Calu3 (cell line): ENCODE measurements at regions of chr10 and their contacts with region 1.

Region 1: GRCh38 chr10:71285180-71285545 is 33.9 kb upstream of the SLC29A3 start:
- DNase-seq: peak; percentile 67
- H3K4me3 Mint-ChIP-seq: no peak overlapping the region
- H3K27ac Mint-ChIP-seq: no peak overlapping the region
- H3K4me1 Mint-ChIP-seq: no peaks in the 10 kb centered on the region
- H3K27me3 Mint-ChIP-seq: peaks cover 97% of the 10 kb centered on the region
- CTCF ChIP-seq: peak; percentile 88

Region 2: GRCh38 chr10:70903262-70903921 is 381.8 kb before region 1 on chr10:
- CTCF ChIA-PET with region 1: interaction called, 8 read pairs
- intact Hi-C with region 1: loop called (anchors 5 kb)
- DNase-seq: peak; percentile 70
- H3K4me3 Mint-ChIP-seq: no peak overlapping the region
- H3K27ac Mint-ChIP-seq: no peak overlapping the region
- H3K4me1 Mint-ChIP-seq: peaks cover 7% of the 10 kb centered on the region
- H3K27me3 Mint-ChIP-seq: peaks cover 94% of the 10 kb centered on the region
- CTCF ChIP-seq: peak; percentile 89

Region 3: GRCh38 chr10:70925377-70926225 is 359.6 kb before region 1 on chr10:
- CTCF ChIA-PET with region 1: interaction called, 4 read pairs
- intact Hi-C with region 1: loop called (anchors 5 kb)
- DNase-seq: peak; percentile 69
- H3K4me3 Mint-ChIP-seq: no peak overlapping the region
- H3K27ac Mint-ChIP-seq: no peak overlapping the region
- H3K4me1 Mint-ChIP-seq: no peaks in the 10 kb centered on the region
- H3K27me3 Mint-ChIP-seq: peaks cover 91% of the 10 kb centered on the region
- CTCF ChIP-seq: peak; percentile 99

Region 4: DNA sequence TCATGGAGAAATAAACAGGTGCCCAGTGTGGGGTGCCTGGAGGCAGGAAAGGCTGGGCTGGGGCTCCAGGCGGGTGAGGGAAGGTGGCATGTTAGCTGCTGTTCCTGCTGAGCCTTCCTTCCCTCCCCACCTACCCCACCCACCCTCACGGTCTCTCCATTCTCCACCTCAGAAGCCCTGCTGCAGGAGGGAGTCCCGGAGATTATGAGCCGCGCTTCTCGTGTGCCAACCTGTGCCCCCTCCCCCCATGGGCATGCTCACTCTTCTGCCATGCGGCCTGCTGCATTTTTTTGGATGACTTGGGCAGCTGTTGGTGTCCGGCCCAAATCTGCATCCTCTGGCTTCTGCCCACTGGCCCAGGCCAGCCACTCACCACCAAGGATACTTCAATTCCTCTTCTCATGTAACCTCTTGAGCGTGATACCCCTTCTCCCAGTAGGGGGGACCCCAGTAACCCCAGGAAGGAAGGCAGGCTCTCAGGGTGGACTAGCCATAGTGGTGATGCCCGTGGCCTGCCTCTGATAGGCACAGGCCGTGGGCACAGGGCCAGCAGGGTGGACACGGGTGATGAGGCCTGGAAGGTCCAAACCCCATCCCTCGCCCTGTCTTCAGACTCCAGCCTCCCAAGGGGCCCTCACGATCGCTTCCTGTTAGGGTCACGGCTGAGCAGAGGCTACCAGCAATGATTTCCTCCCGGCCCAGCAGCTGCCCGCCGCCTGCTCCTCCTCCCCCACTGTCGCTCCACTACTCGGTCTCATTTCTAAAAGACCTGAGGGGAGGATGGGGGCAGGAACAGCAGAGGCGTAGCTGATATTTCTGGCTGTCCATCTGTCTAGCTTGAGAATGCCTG is 45.0 kb before region 1 on chr10:
- CTCF ChIA-PET with region 1: interaction called, 14 read pairs
- intact Hi-C with region 1: no loop called
- DNase-seq: no peak
- H3K4me3 Mint-ChIP-seq: no peak overlapping the region
- H3K27ac Mint-ChIP-seq: no peak overlapping the region
- H3K4me1 Mint-ChIP-seq: no peaks in the 10 kb centered on the region
- H3K27me3 Mint-ChIP-seq: peaks cover 46% of the 10 kb centered on the region
- CTCF ChIP-seq: no peak